Left cardiac atrium (tissue), 4 donors: ENCODE measurements at regions of chr11 and their contacts with region 1.

Region 1: DNA sequence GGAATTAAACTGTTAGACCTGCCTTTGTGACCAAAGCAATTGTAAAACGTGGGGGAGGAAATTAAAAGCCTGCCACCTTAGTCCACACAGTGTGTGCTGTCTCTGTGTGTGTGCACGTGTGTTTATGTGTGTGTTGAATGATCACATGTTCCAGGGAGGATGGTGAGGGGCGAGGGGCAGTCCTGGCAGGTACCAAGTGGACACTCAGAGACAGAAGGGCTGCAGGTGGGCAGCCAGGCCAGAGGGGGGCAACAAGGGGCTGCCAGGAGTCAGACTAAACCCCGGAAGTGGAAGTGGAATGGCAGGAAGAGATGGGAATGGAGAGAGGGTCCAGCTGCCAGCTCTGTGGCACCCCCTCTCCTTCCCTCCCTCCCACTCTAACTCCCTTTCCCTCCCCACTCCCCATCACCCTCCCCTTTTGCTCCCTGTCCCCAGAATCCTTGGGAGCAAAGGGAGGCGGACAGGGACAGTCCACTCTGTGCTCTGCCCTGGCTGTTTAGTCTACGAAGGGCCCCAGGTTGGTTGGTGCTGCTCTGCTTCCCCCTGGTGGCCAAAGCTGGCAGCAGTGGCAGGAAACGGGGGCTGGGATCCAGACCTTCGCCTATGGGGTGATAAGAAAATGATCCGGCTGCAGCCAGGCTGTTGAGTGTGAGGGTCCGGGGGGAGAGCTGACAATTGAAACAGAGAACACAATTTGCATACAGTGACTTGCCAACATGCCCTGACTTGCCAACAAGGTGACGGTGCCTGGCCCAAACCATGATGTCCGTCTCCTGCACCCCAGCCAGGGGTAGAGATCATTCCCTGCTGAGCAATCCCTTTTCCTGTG is 24.4 kb downstream of the P2RY2 start:
- DNase-seq: peak; percentile 83
- ATAC-seq: peak; percentile 66 to 83

Region 2: GRCh38 chr11:73288873-73289707 is 46.6 kb after region 1 on chr11:
- intact Hi-C with region 1: loop called in 1 of 2 experiments (anchors 1 kb)
- DNase-seq: peak; percentile 81
- ATAC-seq: peak; percentile 82 to 86

Region 3: DNA sequence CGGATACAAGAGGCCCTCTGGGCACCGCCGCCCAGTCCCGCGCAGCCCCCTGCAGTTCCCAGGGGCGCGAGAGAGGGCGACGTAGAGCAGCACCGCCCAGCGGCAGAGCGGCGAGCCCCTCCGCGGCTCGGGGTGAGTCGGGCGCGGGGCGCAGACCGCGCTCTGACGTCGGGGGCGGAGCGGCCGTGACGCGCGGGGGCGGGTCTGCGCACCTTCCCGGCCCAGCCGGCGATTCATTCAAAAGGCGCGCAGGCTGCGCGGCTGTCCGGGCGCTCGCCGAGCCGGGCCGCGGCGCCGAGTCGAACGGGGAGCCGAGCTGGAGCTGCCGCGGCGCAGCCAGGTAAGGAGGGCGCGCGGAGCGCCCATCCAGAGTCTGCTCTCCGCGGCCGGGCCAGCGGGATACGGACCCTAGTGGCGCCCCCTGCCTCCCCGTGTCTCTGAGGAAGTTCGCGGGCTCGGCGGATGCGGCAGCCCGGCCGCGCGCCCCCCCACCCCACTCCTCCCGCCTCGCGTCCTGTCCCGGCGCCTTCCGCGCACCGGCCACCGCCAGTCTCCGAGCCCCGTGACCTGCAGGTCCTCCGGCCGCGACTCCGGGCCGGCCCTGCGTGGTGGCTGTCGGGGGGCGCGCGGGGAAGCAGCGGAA is 133.8 kb after region 1 on chr11 and contains the start of gene RELT:
- intact Hi-C with region 1: no loop called
- DNase-seq: peak; percentile 91
- ATAC-seq: peak; percentile 94 to 95
- total RNA-seq, gene RELT: 4.3 to 8.3 TPM